PC-9 (cell line): ENCODE measurements at regions of chr6 and their contacts with region 1.

Region 1: GRCh38 chr6:2432239-2432638 is 186.8 kb upstream of the GMDS start:
- DNase-seq: peak; percentile 50 to 84
- H3K4me3 ChIP-seq: no peak overlapping the region
- H3K27ac ChIP-seq: peak overlapping the region; percentile 94
- H3K4me1 ChIP-seq: peaks cover 37% of the 10 kb centered on the region
- H3K27me3 ChIP-seq: no peaks in the 10 kb centered on the region
- CTCF ChIP-seq: no peak

Region 2: GRCh38 chr6:1952726-1953360 is 479.4 kb before region 1 on chr6:
- CTCF ChIA-PET with region 1: no interaction called
- POLR2A ChIA-PET with region 1: no interaction called
- intact Hi-C with region 1: loop called (anchors 10 kb)
- DNase-seq: peak; percentile 69 to 94
- H3K4me3 ChIP-seq: peak overlapping the region; percentile 42; the same call in 1 of the 2 replicates
- H3K27ac ChIP-seq: peak overlapping the region; percentile 96
- H3K4me1 ChIP-seq: peaks cover 19% of the 10 kb centered on the region
- H3K27me3 ChIP-seq: no peaks in the 10 kb centered on the region
- CTCF ChIP-seq: no peak

Region 3: GRCh38 chr6:2086326-2086965 is 345.8 kb before region 1 on chr6:
- CTCF ChIA-PET with region 1: no interaction called
- POLR2A ChIA-PET with region 1: no interaction called
- intact Hi-C with region 1: no loop called
- DNase-seq: no peak
- H3K4me3 ChIP-seq: no peak overlapping the region
- H3K27ac ChIP-seq: no peak overlapping the region
- H3K4me1 ChIP-seq: no peaks in the 10 kb centered on the region
- H3K27me3 ChIP-seq: no peaks in the 10 kb centered on the region
- CTCF ChIP-seq: no peak

Region 4: GRCh38 chr6:2209226-2209809 is 222.9 kb before region 1 on chr6:
- CTCF ChIA-PET with region 1: interaction called, 10 read pairs
- POLR2A ChIA-PET with region 1: no interaction called
- intact Hi-C with region 1: no loop called
- DNase-seq: peak; percentile 38 to 48
- H3K4me3 ChIP-seq: no peak overlapping the region
- H3K27ac ChIP-seq: no peak overlapping the region
- H3K4me1 ChIP-seq: no peaks in the 10 kb centered on the region
- H3K27me3 ChIP-seq: no peaks in the 10 kb centered on the region
- CTCF ChIP-seq: peak; percentile 62

Region 5: GRCh38 chr6:2245094-2245876 is 187.0 kb before region 1 on chr6 and contains the start of gene GMDS:
- CTCF ChIA-PET with region 1: no interaction called
- POLR2A ChIA-PET with region 1: no interaction called
- intact Hi-C with region 1: loop called (anchors 5 kb)
- DNase-seq: peak; percentile 57 to 87
- H3K4me3 ChIP-seq: peak within 1 kb of the TSS; percentile 86
- H3K27ac ChIP-seq: peak within 1 kb of the TSS; percentile 97
- H3K4me1 ChIP-seq: peaks cover 10% of the 10 kb centered on the region
- H3K27me3 ChIP-seq: no peaks in the 10 kb centered on the region
- CTCF ChIP-seq: no peak
- total RNA-seq, gene GMDS: 30.1 and 38.3 TPM in 2 replicates

Region 6: GRCh38 chr6:2478200-2478599 is 46.0 kb after region 1 on chr6:
- CTCF ChIA-PET with region 1: no interaction called
- POLR2A ChIA-PET with region 1: interaction called, 12 read pairs
- intact Hi-C with region 1: no loop called
- DNase-seq: no peak
- H3K4me3 ChIP-seq: no peak overlapping the region
- H3K27ac ChIP-seq: no peak overlapping the region
- H3K4me1 ChIP-seq: peaks cover 11% of the 10 kb centered on the region
- H3K27me3 ChIP-seq: no peaks in the 10 kb centered on the region
- CTCF ChIP-seq: no peak

Region 7: DNA sequence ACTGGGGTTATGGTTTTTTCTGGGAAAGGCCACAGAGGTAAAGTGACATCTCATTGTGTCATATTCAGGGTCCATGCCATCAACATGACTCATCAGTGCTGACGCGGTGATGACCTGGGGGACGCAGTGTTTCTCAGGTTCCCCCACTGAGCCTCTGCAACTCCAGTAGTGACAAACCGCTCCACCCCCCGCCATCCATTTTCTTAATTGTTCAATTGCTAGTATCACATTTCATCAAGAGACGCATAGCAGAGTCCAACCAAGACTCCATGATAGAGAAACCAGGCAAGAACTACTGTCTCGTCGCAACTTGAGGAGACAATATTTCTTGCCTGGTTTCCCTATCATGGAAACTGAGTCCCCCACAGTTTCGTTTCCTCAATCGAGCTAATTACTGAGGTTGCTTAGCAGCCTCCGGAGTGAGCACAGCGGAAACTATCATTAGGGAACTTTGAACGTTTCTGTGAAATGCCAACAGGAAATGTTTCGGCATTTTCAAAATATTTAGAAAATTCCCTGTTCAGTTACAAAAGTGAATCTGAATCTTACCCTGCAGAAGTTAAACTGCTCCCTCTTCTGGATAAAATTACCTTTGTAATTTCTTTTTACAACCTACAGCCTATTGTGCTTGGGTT is 421.6 kb after region 1 on chr6:
- CTCF ChIA-PET with region 1: no interaction called
- POLR2A ChIA-PET with region 1: interaction called, 4 read pairs
- intact Hi-C with region 1: loop called (anchors 5 kb)
- DNase-seq: peak; percentile 82 to 87
- H3K4me3 ChIP-seq: peak overlapping the region; percentile 60
- H3K27ac ChIP-seq: peak overlapping the region; percentile 99
- H3K4me1 ChIP-seq: peaks cover 24% of the 10 kb centered on the region
- H3K27me3 ChIP-seq: no peaks in the 10 kb centered on the region
- CTCF ChIP-seq: peak; percentile 58